CD4-positive, alpha-beta T cell (primary cell): ENCODE measurements at regions of chr11 and their contacts with region 1.

Region 1: GRCh38 chr11:19259487-19260345 is 19.0 kb upstream of the E2F8 start:
- DNase-seq: peak; percentile 26 to 71 (median 47)
- ATAC-seq: peak; percentile 57
- H3K4me3 ChIP-seq: no peak overlapping the region
- H3K4me3 Mint-ChIP-seq: no peak overlapping the region
- H3K27ac ChIP-seq: no peak overlapping the region
- H3K27ac Mint-ChIP-seq: no peak overlapping the region
- H3K4me1 ChIP-seq: no peaks in the 10 kb centered on the region
- H3K4me1 Mint-ChIP-seq: no peaks in the 10 kb centered on the region
- H3K27me3 ChIP-seq: peaks cover 0 to 10% of the 10 kb centered on the region in 2 experiments
- H3K27me3 Mint-ChIP-seq: no peaks in the 10 kb centered on the region
- CTCF ChIP-seq: peak; percentile 97

Region 2: GRCh38 chr11:18698341-18699268 is 561.1 kb before region 1 on chr11 and contains the start of gene TMEM86A:
- CTCF ChIA-PET with region 1: no interaction called
- POLR2A ChIA-PET with region 1: no interaction called
- intact Hi-C with region 1: no loop called
- DNase-seq: peak; percentile 78 to 96 (median 88)
- ATAC-seq: peak; percentile 92
- H3K4me3 ChIP-seq: peak within 1 kb of the TSS; percentile 60
- H3K4me3 Mint-ChIP-seq: peak within 1 kb of the TSS; percentile 89
- H3K27ac ChIP-seq: peak within 1 kb of the TSS; percentile 47 to 54
- H3K27ac Mint-ChIP-seq: peak within 1 kb of the TSS; percentile 70
- H3K4me1 ChIP-seq: peaks cover 26% of the 10 kb centered on the region
- H3K4me1 Mint-ChIP-seq: peaks cover 14% of the 10 kb centered on the region
- H3K27me3 ChIP-seq: no peaks in the 10 kb centered on the region
- H3K27me3 Mint-ChIP-seq: no peaks in the 10 kb centered on the region
- CTCF ChIP-seq: no peak
- total RNA-seq, gene TMEM86A: 8.0 to 8.5 TPM

Region 3: GRCh38 chr11:19553683-19554333 is 294.1 kb after region 1 on chr11:
- CTCF ChIA-PET with region 1: no interaction called
- POLR2A ChIA-PET with region 1: no interaction called
- intact Hi-C with region 1: loop called in 1 of 2 experiments (anchors 10 kb)
- DNase-seq: peak; percentile 37 to 74 (median 54)
- ATAC-seq: peak; percentile 48
- H3K4me3 ChIP-seq: no peak overlapping the region
- H3K4me3 Mint-ChIP-seq: no peak overlapping the region
- H3K27ac ChIP-seq: no peak overlapping the region
- H3K27ac Mint-ChIP-seq: no peak overlapping the region
- H3K4me1 ChIP-seq: peaks cover 3% of the 10 kb centered on the region
- H3K4me1 Mint-ChIP-seq: no peaks in the 10 kb centered on the region
- H3K27me3 ChIP-seq: peaks cover 0 to 1% of the 10 kb centered on the region in 2 experiments
- H3K27me3 Mint-ChIP-seq: peaks cover 20% of the 10 kb centered on the region
- CTCF ChIP-seq: peak; percentile 75